MCF 10A (cell line): ENCODE measurements at regions of chr6 and their contacts with region 1.

Region 1: DNA sequence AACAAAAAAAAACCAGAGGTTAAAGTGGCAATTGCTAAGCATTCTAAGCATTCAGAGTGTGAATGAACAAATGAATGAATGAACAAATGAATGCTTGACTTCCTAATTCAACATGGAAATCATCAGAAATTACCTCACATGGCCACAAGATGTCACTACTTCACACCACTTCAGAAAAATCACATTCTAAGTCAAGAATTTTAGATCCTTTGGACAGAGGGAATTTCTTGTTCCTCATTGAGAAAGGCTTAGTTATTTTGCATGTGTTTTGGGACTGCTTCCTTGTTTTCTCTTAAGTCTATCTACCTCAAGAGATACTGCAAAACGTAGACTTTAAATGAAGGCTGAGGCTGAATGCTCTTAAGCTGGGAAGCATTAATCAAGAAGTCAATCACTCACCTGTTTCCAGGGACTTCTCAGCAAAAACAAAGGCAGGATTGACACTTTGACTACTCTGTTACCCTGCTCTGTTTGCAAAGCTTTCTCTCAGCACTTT is 120.2 kb downstream of the MBOAT1 start:
- DNase-seq: peak; percentile 45
- H3K4me3 Mint-ChIP-seq: no peak overlapping the region
- H3K27ac Mint-ChIP-seq: no peak overlapping the region
- H3K4me1 Mint-ChIP-seq: no peaks in the 10 kb centered on the region
- H3K27me3 Mint-ChIP-seq: no peaks in the 10 kb centered on the region
- CTCF ChIP-seq: peak; percentile 51

Region 2: DNA sequence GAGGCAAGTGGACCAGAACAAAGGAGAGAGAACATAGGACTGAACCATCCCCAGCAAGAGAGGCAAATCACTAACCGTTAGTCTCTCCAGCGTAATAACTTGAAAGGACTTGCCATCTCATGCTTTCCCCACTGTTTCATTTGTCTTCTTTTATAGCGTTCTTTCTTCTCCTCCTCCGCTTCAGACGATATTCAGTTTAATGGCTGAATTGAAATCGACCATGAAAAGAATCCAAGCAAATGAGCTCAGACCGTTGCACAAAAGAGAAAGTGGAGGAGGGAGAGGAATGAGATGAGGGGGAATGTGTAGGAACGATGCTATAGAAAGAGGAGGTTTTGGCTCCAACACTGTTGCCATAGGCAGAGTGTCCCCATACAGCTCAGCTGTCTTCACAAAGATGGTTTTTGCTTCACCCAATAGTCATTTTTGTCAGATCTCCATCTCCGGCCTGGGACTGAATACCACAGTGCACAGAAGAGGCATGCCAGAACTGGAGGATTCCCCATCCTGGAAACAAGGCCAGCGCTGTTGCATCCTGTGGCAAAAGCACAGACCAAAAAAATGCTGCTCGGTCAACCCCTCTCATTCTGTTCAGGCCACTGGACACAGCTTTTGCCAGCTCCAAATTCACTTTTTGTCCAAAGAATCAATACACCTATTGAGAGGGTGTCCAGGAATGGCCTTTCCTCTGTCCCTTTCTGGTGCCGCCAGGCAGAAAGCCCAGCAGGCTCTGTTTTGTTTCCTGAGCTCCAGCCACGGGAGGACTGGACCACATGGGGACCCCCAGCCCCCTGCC is 78.9 kb before region 1 on chr6:
- CTCF ChIA-PET with region 1: no interaction called
- POLR2A ChIA-PET with region 1: no interaction called
- intact Hi-C with region 1: no loop called
- DNase-seq: no peak
- H3K4me3 Mint-ChIP-seq: no peak overlapping the region
- H3K27ac Mint-ChIP-seq: no peak overlapping the region
- H3K4me1 Mint-ChIP-seq: no peaks in the 10 kb centered on the region
- H3K27me3 Mint-ChIP-seq: peaks cover 26% of the 10 kb centered on the region
- CTCF ChIP-seq: no peak

Region 3: DNA sequence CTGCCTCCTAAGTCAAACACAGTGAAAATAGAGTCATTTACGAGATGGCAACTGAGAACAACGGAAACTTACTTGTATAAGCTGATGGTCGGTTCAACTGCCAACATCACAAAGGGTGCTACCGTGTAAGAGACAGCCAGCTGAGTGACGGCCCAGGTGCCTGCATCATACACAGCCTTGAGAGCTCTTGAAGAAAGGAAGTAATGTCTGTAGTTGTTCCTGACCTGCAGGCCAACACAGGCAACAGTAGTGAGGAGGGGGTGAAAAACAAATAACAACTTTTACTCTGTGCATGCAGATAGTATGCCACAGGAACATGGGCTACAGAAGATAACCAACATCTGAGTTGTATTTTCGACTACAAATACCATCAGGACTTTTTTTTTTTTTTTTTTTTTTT is 17.4 kb after region 1 on chr6:
- CTCF ChIA-PET with region 1: interaction called, 57 read pairs
- POLR2A ChIA-PET with region 1: no interaction called
- intact Hi-C with region 1: no loop called
- DNase-seq: no peak
- H3K4me3 Mint-ChIP-seq: no peak overlapping the region
- H3K27ac Mint-ChIP-seq: no peak overlapping the region
- H3K4me1 Mint-ChIP-seq: no peaks in the 10 kb centered on the region
- H3K27me3 Mint-ChIP-seq: no peaks in the 10 kb centered on the region
- CTCF ChIP-seq: no peak

Region 4: GRCh38 chr6:20126789-20127653 is 34.9 kb after region 1 on chr6:
- CTCF ChIA-PET with region 1: interaction called, 40 read pairs
- POLR2A ChIA-PET with region 1: interaction called, 3 read pairs
- intact Hi-C with region 1: loop called (anchors 1 kb)
- DNase-seq: peak; percentile 61
- H3K4me3 Mint-ChIP-seq: no peak overlapping the region
- H3K27ac Mint-ChIP-seq: no peak overlapping the region
- H3K4me1 Mint-ChIP-seq: peaks cover 7% of the 10 kb centered on the region
- H3K27me3 Mint-ChIP-seq: no peaks in the 10 kb centered on the region
- CTCF ChIP-seq: peak; percentile 89

Region 5: GRCh38 chr6:20212392-20213217 is 120.5 kb after region 1 on chr6 and contains the start of gene MBOAT1:
- CTCF ChIA-PET with region 1: no interaction called
- POLR2A ChIA-PET with region 1: no interaction called
- intact Hi-C with region 1: loop called (anchors 10 kb)
- DNase-seq: peak; percentile 94
- H3K4me3 Mint-ChIP-seq: peak within 1 kb of the TSS; percentile 86
- H3K27ac Mint-ChIP-seq: peak within 1 kb of the TSS; percentile 78
- H3K4me1 Mint-ChIP-seq: peaks cover 12% of the 10 kb centered on the region
- H3K27me3 Mint-ChIP-seq: no peaks in the 10 kb centered on the region
- CTCF ChIP-seq: no peak
- total RNA-seq, gene MBOAT1: 6.3 and 9.3 TPM in 2 replicates

Region 6: GRCh38 chr6:20291764-20292580 is 199.9 kb after region 1 on chr6:
- CTCF ChIA-PET with region 1: interaction called, 14 read pairs
- POLR2A ChIA-PET with region 1: no interaction called
- intact Hi-C with region 1: loop called (anchors 1 kb)
- DNase-seq: peak; percentile 90
- H3K4me3 Mint-ChIP-seq: no peak overlapping the region
- H3K27ac Mint-ChIP-seq: no peak overlapping the region
- H3K4me1 Mint-ChIP-seq: no peaks in the 10 kb centered on the region
- H3K27me3 Mint-ChIP-seq: peaks cover 17% of the 10 kb centered on the region
- CTCF ChIP-seq: peak; percentile 81

Region 7: GRCh38 chr6:20401205-20402091 is 309.3 kb after region 1 on chr6 and contains the start of gene E2F3:
- CTCF ChIA-PET with region 1: interaction called, 4 read pairs
- POLR2A ChIA-PET with region 1: no interaction called
- intact Hi-C with region 1: loop called (anchors 5 kb)
- DNase-seq: peak; percentile 100
- H3K4me3 Mint-ChIP-seq: peak within 1 kb of the TSS; percentile 98
- H3K27ac Mint-ChIP-seq: peak within 1 kb of the TSS; percentile 91
- H3K4me1 Mint-ChIP-seq: peaks cover 8% of the 10 kb centered on the region
- H3K27me3 Mint-ChIP-seq: no peaks in the 10 kb centered on the region
- CTCF ChIP-seq: no peak
- total RNA-seq, gene E2F3: 18.5 and 18.7 TPM in 2 replicates

Region 8: DNA sequence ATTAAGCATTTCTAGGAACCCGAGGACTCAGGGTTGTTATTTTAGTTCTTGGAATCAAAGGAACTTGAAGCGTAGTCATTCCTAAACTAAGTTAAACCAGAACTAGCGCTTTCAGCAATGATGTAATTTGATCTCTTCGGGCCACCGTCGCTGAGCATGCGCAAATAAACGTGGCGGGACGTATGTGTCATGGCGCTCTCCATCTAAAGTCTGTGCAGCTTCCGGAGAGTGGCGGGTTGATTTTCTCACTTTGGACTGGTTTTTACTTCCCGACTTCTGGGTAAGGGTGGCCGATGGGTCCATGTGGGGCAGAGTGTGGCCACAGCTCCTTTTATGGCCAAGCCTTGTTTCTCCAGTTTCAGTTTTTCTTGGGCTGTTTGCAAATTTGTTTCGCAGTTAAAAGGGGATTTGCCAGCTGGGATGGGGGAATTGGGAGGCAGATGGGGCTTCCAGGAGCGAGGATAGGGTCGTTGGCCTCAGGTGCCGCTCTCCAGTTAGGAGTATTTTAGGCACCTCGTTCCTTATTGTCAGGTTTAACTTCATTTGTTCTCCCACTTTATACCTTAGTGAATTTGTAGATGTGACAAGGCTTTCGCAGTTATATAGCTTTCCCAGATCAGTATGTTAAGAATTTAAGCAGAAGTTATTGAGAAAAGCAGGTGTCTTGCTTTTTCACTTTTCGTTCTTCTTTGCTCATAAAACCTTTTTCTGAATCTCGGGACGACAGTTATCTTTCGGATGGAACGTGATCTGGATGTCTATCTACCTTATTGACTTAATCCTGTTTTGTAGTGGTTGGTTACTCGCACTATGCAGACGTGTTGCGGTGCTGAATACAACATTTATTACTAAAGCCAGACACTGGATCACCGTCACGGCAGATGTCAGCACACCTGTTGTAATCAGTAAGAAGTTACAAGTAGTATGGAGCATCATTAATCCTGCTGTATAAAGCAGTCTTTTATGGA is 442.5 kb after region 1 on chr6 and contains the start of gene CDKAL1:
- CTCF ChIA-PET with region 1: interaction called, 7 read pairs
- POLR2A ChIA-PET with region 1: no interaction called
- intact Hi-C with region 1: loop called (anchors 1 kb)
- DNase-seq: peak; percentile 89
- H3K4me3 Mint-ChIP-seq: peak within 1 kb of the TSS; percentile 86
- H3K27ac Mint-ChIP-seq: peak within 1 kb of the TSS; percentile 92
- H3K4me1 Mint-ChIP-seq: peaks cover 19% of the 10 kb centered on the region
- H3K27me3 Mint-ChIP-seq: no peaks in the 10 kb centered on the region
- CTCF ChIP-seq: no peak
- total RNA-seq, gene CDKAL1: 11.8 and 13.2 TPM in 2 replicates

Region 9: DNA sequence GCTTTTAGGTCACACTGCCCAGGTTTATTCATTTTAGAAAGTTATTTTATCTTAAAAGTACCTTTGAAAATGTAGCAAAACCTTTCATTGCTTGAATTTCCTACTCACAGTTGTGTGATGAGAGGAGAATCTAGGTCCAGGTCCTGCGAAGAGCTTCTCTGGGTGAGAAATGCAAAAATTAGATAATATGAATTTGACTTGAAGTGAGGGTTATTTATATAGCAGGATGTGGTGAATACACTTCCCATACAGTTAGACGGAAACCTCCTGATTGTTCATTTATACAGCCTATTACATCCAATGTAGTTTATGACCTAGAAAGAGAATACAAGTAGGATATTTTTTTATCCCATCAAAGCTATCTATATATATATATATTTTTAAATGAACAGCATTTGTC is 472.7 kb after region 1 on chr6:
- CTCF ChIA-PET with region 1: no interaction called
- POLR2A ChIA-PET with region 1: no interaction called
- intact Hi-C with region 1: no loop called
- DNase-seq: no peak
- H3K4me3 Mint-ChIP-seq: no peak overlapping the region
- H3K27ac Mint-ChIP-seq: no peak overlapping the region
- H3K4me1 Mint-ChIP-seq: peaks cover 17% of the 10 kb centered on the region
- H3K27me3 Mint-ChIP-seq: no peaks in the 10 kb centered on the region
- CTCF ChIP-seq: no peak